ENCODE measurements at regions of chr13 and their contacts with region 1.

Region 1: DNA sequence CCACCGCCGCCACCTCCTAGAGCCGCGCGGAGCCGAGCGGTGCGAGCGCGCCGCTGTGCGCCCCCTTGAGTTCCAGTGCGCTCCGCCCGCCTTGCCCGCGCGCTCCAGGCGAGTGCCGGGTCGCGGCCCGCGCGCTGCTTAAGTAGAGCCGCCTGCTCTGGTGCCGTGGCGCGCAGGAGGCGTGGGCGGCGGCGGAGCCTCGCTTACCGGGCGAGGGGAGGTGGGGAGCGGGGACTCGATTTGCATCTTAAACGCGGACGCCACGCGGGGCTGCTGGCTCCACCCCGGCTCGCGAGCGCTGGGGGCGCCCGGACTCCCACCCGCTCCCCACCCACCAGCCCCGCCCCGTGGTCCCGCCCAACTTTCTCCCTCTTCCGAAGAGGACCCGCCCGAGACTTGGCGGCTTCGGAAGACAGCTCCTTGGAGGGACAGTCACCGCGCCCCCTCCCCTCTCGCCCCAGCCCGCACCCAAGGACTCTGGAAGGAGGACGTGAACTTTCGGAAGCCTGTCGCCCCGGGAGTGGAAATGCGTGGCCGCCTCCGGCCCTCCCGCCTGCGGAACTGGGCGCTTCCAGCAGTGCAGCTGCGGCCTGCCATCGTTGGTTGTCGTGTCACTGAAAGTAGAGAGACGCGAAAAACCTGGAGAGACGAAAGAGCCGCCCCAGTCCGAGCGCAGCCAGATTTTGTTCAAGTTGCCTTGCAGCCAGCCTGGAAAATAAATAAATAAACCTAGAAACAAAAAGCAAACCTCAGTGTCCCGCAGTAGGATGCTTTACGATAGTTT is at the start of gene KCTD12:
- DNase-seq: peak; percentile 64 to 94
- H3K4me3 ChIP-seq: peak within 1 kb of the TSS; percentile 94 to 99
- H3K27ac ChIP-seq: peak within 1 kb of the TSS; percentile 87 to 97
- H3K4me1 ChIP-seq: peaks cover 0 to 9% of the 10 kb centered on the region in 2 donors
- H3K27me3 ChIP-seq: no peaks in the 10 kb centered on the region
- CTCF ChIP-seq: peak in 2 of 3 experiments; percentile 35 to 38
- total RNA-seq, gene KCTD12: 120 TPM

Region 2: GRCh38 chr13:75549262-75550158 is 1337.0 kb before region 1 on chr13 and contains the start of gene UCHL3:
- intact Hi-C with region 1: loop called (anchors 10 kb)
- DNase-seq: peak; percentile 82 to 97
- H3K4me3 ChIP-seq: peak within 1 kb of the TSS; percentile 74 to 94
- H3K27ac ChIP-seq: peak within 1 kb of the TSS; percentile 70 to 81
- H3K4me1 ChIP-seq: peaks cover 0 to 4% of the 10 kb centered on the region in 2 donors
- H3K27me3 ChIP-seq: no peaks in the 10 kb centered on the region
- CTCF ChIP-seq: peak; percentile 82 to 93 (median 91)
- total RNA-seq, gene UCHL3: not detected

Region 3: DNA sequence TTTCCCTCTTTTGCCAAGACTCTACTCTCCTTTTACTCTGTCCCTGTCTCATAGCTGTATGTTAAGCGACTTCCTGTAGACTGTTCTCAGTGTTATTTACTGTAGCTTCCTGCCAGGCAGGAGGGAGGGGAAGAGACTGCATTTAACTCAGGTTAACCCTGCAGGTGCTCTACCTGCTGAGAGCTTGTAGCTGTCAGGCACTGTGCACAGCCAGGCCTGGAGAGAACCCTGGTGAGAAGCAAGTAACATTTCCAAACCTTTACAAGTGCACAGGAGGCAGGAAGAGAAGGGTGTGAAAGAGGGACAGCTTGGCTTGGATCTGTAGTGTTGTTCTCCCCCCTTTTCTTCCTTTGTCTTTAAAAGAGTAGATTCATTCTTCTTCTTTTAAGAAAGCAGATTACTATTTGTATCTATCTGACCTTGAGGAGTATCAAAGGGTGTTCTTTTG is 1083.3 kb before region 1 on chr13:
- intact Hi-C with region 1: loop called (anchors 10 kb)
- DNase-seq: no peak
- H3K4me3 ChIP-seq: peak overlapping the region in 1 of 2 donors; percentile 63
- H3K27ac ChIP-seq: peak overlapping the region; percentile 86 to 88
- H3K4me1 ChIP-seq: peaks cover 3 to 10% of the 10 kb centered on the region in 2 donors
- H3K27me3 ChIP-seq: no peaks in the 10 kb centered on the region
- CTCF ChIP-seq: no peak

Region 4: GRCh38 chr13:76016799-76017400 is 869.6 kb before region 1 on chr13:
- intact Hi-C with region 1: loop called (anchors 10 kb)
- DNase-seq: no peak
- H3K4me3 ChIP-seq: no peak overlapping the region
- H3K27ac ChIP-seq: no peak overlapping the region
- H3K4me1 ChIP-seq: peaks cover 0 to 14% of the 10 kb centered on the region in 2 donors
- H3K27me3 ChIP-seq: no peaks in the 10 kb centered on the region
- CTCF ChIP-seq: peak in 1 of 3 experiments; percentile 21

Region 5: GRCh38 chr13:76637641-76638141 is 248.8 kb before region 1 on chr13:
- intact Hi-C with region 1: loop called (anchors 10 kb)
- DNase-seq: no peak
- H3K4me3 ChIP-seq: no peak overlapping the region
- H3K27ac ChIP-seq: peak overlapping the region; percentile 43 to 79
- H3K4me1 ChIP-seq: peaks cover 0 to 10% of the 10 kb centered on the region in 2 donors
- H3K27me3 ChIP-seq: no peaks in the 10 kb centered on the region
- CTCF ChIP-seq: no peak

Region 6: GRCh38 chr13:76822698-76823267 is 63.7 kb before region 1 on chr13:
- intact Hi-C with region 1: loop called (anchors 5 kb)
- DNase-seq: no peak
- H3K4me3 ChIP-seq: no peak overlapping the region
- H3K27ac ChIP-seq: no peak overlapping the region
- H3K4me1 ChIP-seq: no peaks in the 10 kb centered on the region
- H3K27me3 ChIP-seq: no peaks in the 10 kb centered on the region
- CTCF ChIP-seq: peak; percentile 9 to 39 (median 19)

Region 7: DNA sequence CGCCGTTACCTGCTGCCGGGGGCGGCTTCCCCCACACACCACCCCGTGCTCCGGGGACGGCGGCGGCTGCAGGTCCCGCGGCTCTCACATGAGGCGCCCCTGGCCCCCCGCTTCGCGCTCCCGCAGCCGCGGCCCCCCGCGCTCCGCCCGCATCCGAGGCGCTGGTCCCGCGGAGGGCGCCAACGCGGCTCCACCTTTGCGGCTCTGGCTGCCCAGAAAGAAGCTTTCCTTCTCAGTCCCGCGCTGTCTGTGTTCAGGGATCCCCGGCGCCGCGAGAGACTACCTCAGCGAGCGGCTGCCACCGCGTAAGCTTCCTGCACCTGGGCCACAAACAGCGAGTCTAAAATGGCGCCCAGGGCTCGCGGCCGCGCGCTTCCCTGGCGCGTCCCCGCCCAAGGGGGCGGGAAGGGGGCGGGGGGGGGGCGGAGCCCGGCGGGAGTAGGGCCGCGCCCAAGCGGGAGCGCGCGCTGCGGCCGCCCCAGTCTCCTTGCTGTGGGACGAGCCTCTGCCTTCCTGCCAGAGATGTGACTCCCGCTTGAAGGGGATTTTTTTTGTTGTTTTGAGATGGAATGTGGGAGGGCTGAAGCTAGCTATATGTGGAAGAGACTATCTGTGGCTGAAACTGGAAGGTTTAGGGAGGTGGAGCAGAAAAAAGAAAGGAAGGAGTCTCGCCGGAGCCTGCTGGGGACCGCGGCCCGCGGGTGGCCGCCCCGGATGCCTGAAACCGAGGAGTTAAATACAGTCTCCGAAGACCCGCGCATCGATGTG is 140.5 kb after region 1 on chr13 and contains the start of gene FBXL3:
- intact Hi-C with region 1: loop called (anchors 10 kb)
- DNase-seq: peak; percentile 36 to 91
- H3K4me3 ChIP-seq: peak within 1 kb of the TSS; percentile 88 to 100
- H3K27ac ChIP-seq: peak within 1 kb of the TSS; percentile 95 to 100
- H3K4me1 ChIP-seq: peaks cover 0 to 6% of the 10 kb centered on the region in 2 donors
- H3K27me3 ChIP-seq: no peaks in the 10 kb centered on the region
- CTCF ChIP-seq: no peak
- total RNA-seq, gene FBXL3: 102 TPM

Measured in ascending aorta (tissue), 2 donors.